ENCODE measurements at regions of chr1 and their contacts with region 1.

Region 1: GRCh38 chr1:19139711-19140110 is 70.4 kb downstream of the UBR4 start:
- DNase-seq: no peak
- ATAC-seq: no peak
- H3K4me3 ChIP-seq: no peak overlapping the region
- H3K27ac ChIP-seq: peak overlapping the region in 4 of 12 donors; percentile 14 to 76 (median 54)
- H3K4me1 ChIP-seq: peaks cover 0 to 17% (median 6%) of the 10 kb centered on the region in 12 donors
- H3K27me3 ChIP-seq: no peaks in the 10 kb centered on the region
- CTCF ChIP-seq: no peak
- POLR2A ChIP-seq: no peak

Region 2: GRCh38 chr1:18868801-18869424 is 270.8 kb before region 1 on chr1:
- intact Hi-C with region 1: no loop called
- DNase-seq: no peak
- ATAC-seq: no peak
- H3K4me3 ChIP-seq: no peak overlapping the region
- H3K27ac ChIP-seq: no peak overlapping the region
- H3K4me1 ChIP-seq: no peaks in the 10 kb centered on the region
- H3K27me3 ChIP-seq: peaks cover 0 to 13% (median 0%) of the 10 kb centered on the region in 9 donors
- CTCF ChIP-seq: no peak
- POLR2A ChIP-seq: no peak

Region 3: GRCh38 chr1:18913065-18913835 is 226.5 kb before region 1 on chr1:
- intact Hi-C with region 1: no loop called
- DNase-seq: peak; percentile 84 to 92 (median 85)
- ATAC-seq: peak; percentile 79 to 95 (median 90)
- H3K4me3 ChIP-seq: peak overlapping the region in 3 of 12 donors; percentile 7 to 15 (median 13)
- H3K27ac ChIP-seq: peak overlapping the region; percentile 7 to 79 (median 60)
- H3K4me1 ChIP-seq: peaks cover 0 to 36% (median 29%) of the 10 kb centered on the region in 12 donors
- H3K27me3 ChIP-seq: no peaks in the 10 kb centered on the region
- CTCF ChIP-seq: peak; percentile 90 to 99 (median 97)
- POLR2A ChIP-seq: no peak

Region 4: GRCh38 chr1:19113697-19114092 is 26.0 kb before region 1 on chr1:
- intact Hi-C with region 1: no loop called
- DNase-seq: no peak
- ATAC-seq: peak in 2 of 4 donors; percentile 28 to 45
- H3K4me3 ChIP-seq: no peak overlapping the region
- H3K27ac ChIP-seq: no peak overlapping the region
- H3K4me1 ChIP-seq: no peaks in the 10 kb centered on the region
- H3K27me3 ChIP-seq: no peaks in the 10 kb centered on the region
- CTCF ChIP-seq: peak in 10 of 12 donors; percentile 14 to 56 (median 32)
- POLR2A ChIP-seq: no peak

Region 5: DNA sequence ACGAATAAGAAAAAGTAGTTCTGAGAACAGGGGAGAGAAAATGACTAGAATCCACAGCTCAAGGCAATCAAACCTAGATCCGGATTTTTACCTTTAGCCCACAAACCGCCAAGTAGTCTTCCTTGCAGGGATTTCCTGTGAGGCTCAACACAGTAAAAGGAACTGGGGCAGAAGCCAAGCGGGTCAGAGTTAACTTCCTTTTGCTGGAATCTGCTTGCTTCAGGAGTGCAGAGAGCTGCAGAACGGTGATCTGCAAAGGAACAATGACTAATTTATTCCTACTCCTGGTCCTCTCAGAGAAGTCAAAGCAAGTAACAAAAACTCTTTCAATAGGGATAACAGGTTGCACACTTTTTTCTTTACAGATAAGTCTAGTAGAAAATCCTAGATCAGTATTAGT is 17.0 kb after region 1 on chr1:
- intact Hi-C with region 1: loop called in 1 of 10 experiments (anchors 1 kb)
- DNase-seq: peak in 4 of 5 donors; percentile 56 to 75 (median 69)
- ATAC-seq: peak; percentile 39 to 95 (median 82)
- H3K4me3 ChIP-seq: no peak overlapping the region
- H3K27ac ChIP-seq: peak overlapping the region in 10 of 12 donors; percentile 45 to 72 (median 62)
- H3K4me1 ChIP-seq: peaks cover 0 to 33% (median 10%) of the 10 kb centered on the region in 12 donors
- H3K27me3 ChIP-seq: no peaks in the 10 kb centered on the region
- CTCF ChIP-seq: no peak
- POLR2A ChIP-seq: no peak

Region 6: DNA sequence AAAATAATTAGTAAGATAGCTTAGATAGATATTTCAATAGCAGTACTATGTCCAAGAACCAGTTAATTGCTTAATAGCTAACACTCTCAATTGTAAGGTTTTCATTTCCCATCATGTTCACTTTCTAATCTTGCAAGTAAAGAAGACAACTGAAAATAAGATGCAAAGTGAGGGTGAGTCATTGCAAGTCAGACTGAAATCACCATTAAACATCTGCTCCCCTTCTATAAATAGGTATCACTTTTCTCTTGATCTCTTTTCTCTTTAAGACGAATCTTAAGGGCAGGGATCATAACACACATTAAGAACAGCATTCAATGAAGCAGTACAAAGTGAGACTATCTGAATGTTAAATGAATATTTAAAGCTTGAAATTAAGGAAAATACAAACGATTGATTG is 29.9 kb after region 1 on chr1:
- intact Hi-C with region 1: loop called in 1 of 10 experiments (anchors 5 kb)
- DNase-seq: no peak
- ATAC-seq: no peak
- H3K4me3 ChIP-seq: no peak overlapping the region
- H3K27ac ChIP-seq: no peak overlapping the region
- H3K4me1 ChIP-seq: peaks cover 0 to 15% (median 0%) of the 10 kb centered on the region in 12 donors
- H3K27me3 ChIP-seq: no peaks in the 10 kb centered on the region
- CTCF ChIP-seq: no peak
- POLR2A ChIP-seq: no peak

Region 7: DNA sequence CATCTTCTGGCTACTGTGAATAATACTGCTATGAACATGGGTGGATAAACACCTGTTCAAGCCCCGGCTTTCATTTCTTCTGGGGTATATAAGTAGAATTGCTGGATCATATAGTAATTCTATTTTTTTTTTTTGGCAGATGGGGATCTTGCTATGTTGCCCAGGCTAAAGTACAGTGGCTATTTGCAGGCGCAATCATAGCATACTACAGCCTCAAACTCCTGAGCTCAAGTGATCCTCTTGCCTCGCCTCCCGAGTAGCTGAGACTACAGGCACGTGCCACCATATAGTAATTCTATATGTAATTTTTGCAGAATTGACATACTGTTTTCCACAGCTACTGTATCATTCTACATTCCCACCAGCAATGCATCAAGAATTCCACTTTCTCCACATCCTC is 42.5 kb after region 1 on chr1:
- intact Hi-C with region 1: no loop called
- DNase-seq: no peak
- ATAC-seq: no peak
- H3K4me3 ChIP-seq: no peak overlapping the region
- H3K27ac ChIP-seq: no peak overlapping the region
- H3K4me1 ChIP-seq: peaks cover 0 to 5% (median 0%) of the 10 kb centered on the region in 12 donors
- H3K27me3 ChIP-seq: no peaks in the 10 kb centered on the region
- CTCF ChIP-seq: no peak
- POLR2A ChIP-seq: no peak